ENCODE measurements at regions of chr20 and their contacts with region 1.

Region 1: DNA sequence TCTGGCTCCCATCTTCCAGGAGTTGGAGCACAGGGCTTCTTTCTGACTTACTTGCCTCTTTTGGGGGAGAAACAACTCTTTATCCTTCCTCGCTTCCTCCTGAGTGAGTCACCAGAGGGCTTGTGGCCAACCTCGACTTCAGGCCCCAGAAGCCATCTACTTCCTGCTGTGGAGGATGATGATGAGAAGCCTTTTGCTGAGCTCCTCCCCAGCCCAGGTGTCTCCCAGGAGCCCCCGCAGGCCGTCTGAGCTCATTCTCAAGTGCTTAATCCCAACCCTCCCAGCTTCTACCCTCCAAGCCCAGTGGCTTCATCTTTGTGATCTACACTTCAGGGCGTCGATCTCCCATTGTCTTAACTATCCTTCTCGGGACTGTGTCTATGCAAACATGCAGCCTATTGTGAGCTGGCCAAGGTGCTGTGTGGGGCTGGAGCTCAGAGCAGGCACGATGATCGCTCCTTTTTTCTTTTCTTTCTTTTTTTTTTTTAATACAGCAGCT is 27.9 kb downstream of the SDCBP2 start:
- DNase-seq: peak; percentile 64
- H3K4me3 ChIP-seq: no peak overlapping the region
- H3K27ac ChIP-seq: no peak overlapping the region
- H3K4me1 ChIP-seq: peaks cover 12% of the 10 kb centered on the region
- H3K27me3 ChIP-seq: no peaks in the 10 kb centered on the region
- CTCF ChIP-seq: no peak
- POLR2A ChIP-seq: no peak

Region 2: DNA sequence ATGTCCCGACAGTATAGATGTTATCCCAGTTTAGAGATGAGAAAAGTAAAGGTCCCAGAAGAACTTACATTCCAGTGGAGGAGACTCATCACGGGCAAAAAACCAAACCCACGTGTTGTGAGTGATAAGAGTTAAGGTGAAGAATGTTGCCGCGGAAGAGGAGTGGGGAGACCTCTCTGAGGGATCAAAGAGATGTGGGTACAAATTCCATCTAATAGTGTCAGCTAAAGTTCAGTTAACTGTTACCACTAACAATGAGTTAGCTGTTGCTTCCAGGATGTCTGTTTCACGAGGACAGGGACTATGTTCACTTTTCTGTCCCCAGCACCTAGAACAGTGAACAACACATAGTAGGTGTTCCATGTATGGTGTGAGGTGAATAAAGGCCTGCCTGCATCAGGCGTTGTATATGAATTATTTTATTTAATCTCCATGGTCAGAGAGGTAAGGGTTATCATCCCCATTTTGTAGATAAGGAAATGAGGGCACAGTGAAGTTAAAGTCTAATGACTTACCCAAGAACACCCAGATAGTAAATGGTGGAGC is 259.2 kb before region 1 on chr20:
- CTCF ChIA-PET with region 1: no interaction called
- POLR2A ChIA-PET with region 1: no interaction called
- dilution Hi-C with region 1: no loop called
- intact Hi-C with region 1: no loop called
- DNase-seq: no peak
- H3K4me3 ChIP-seq: no peak overlapping the region
- H3K27ac ChIP-seq: no peak overlapping the region
- H3K4me1 ChIP-seq: no peaks in the 10 kb centered on the region
- H3K27me3 ChIP-seq: no peaks in the 10 kb centered on the region
- CTCF ChIP-seq: no peak
- POLR2A ChIP-seq: no peak

Region 3: GRCh38 chr20:1225783-1226654 is 75.1 kb before region 1 on chr20 and contains the start of gene RAD21L1:
- CTCF ChIA-PET with region 1: no interaction called
- POLR2A ChIA-PET with region 1: no interaction called
- dilution Hi-C with region 1: no loop called
- intact Hi-C with region 1: loop called (anchors 5 kb)
- DNase-seq: peak; percentile 50
- H3K4me3 ChIP-seq: peak within 1 kb of the TSS; percentile 70 to 90 (median 71)
- H3K27ac ChIP-seq: peak within 1 kb of the TSS; percentile 70
- H3K4me1 ChIP-seq: peaks cover 6% of the 10 kb centered on the region
- H3K27me3 ChIP-seq: peaks cover 0 to 23% of the 10 kb centered on the region in 2 experiments
- CTCF ChIP-seq: no peak
- POLR2A ChIP-seq: no peak
- total RNA-seq, gene RAD21L1: not detected in 2 replicates